ENCODE measurements at regions of chr13 and their contacts with region 1.

Region 1: GRCh38 chr13:101144808-101145419 is 271.4 kb downstream of the NALCN start:
- DNase-seq: peak; percentile 18
- ATAC-seq: no peak
- H3K4me3 Mint-ChIP-seq: no peak overlapping the region
- H3K27ac Mint-ChIP-seq: no peak overlapping the region
- H3K4me1 Mint-ChIP-seq: no peaks in the 10 kb centered on the region
- H3K27me3 Mint-ChIP-seq: peaks cover 28% of the 10 kb centered on the region

Region 2: DNA sequence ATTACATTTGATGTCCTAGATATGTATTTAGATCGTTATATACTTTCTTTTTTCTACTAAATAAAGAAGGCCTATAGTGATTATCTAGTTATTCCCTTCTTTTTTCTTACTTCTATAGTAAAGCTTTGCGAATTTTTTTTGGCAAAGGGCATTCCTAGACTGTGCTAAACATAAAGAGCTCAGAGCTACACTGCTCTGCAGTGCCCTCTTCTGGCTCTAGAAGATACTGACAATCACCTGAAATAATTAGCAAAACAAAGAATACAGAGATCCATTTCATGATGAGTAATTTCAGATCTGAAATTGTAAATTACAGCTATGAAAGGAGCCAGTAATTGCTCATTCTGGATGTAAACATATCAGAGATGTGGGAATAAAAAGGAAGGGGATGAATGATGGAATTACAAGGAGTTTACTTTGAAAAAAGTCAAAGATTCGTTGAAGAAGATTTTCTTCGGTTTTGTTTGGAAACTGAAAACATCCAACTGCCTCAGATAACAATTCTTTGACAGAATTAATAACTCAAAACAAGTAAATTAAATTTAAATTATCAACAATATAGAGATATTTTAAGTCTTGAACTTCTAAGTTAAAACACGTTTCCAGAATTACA is 17.1 kb before region 1 on chr13:
- CTCF ChIA-PET with region 1: interaction called, 14 read pairs
- POLR2A ChIA-PET with region 1: no interaction called
- intact Hi-C with region 1: no loop called
- DNase-seq: peak; percentile 28
- ATAC-seq: peak; percentile 76
- H3K4me3 Mint-ChIP-seq: no peak overlapping the region
- H3K27ac Mint-ChIP-seq: no peak overlapping the region
- H3K4me1 Mint-ChIP-seq: peaks cover 2% of the 10 kb centered on the region
- H3K27me3 Mint-ChIP-seq: peaks cover 6% of the 10 kb centered on the region

Region 3: GRCh38 chr13:101170306-101170705 is 25.4 kb after region 1 on chr13:
- CTCF ChIA-PET with region 1: interaction called, 12 read pairs
- POLR2A ChIA-PET with region 1: no interaction called
- intact Hi-C with region 1: no loop called
- DNase-seq: no peak
- ATAC-seq: no peak
- H3K4me3 Mint-ChIP-seq: no peak overlapping the region
- H3K27ac Mint-ChIP-seq: no peak overlapping the region
- H3K4me1 Mint-ChIP-seq: no peaks in the 10 kb centered on the region
- H3K27me3 Mint-ChIP-seq: peaks cover 7% of the 10 kb centered on the region

Region 4: DNA sequence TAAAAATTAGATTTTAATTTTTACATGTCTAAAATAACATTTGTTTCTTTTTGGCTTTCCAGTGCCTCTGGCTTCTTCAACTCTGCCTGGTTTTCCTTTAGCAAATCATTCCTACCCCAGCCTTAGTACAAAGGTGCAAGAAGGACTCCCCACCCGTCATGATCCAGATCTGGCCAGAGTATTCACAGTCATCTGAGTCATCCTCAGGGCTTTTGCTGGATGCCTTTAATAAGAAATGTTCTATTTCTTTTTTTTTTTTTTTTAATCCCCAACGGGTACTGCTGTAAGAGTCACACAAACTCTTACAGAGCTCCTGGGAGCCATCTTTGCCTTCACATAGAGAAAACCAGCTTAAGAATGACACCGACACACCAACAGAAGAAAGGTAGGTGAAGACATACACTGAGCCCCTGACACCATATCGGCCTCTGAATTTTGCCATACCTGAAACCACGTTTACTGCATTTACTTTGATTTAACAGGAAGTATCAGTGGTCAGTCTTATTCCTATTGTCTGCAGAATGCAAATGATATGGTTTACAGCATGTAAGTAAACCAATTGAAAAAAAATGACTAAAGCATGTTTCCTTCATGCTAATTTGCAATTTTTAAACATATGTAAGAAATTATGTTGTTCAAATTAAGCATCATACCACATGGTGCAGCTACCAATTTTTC is 87.0 kb after region 1 on chr13:
- CTCF ChIA-PET with region 1: no interaction called
- POLR2A ChIA-PET with region 1: no interaction called
- intact Hi-C with region 1: no loop called
- DNase-seq: no peak
- ATAC-seq: no peak
- H3K4me3 Mint-ChIP-seq: no peak overlapping the region
- H3K27ac Mint-ChIP-seq: no peak overlapping the region
- H3K4me1 Mint-ChIP-seq: no peaks in the 10 kb centered on the region
- H3K27me3 Mint-ChIP-seq: peaks cover 4% of the 10 kb centered on the region

Region 5: DNA sequence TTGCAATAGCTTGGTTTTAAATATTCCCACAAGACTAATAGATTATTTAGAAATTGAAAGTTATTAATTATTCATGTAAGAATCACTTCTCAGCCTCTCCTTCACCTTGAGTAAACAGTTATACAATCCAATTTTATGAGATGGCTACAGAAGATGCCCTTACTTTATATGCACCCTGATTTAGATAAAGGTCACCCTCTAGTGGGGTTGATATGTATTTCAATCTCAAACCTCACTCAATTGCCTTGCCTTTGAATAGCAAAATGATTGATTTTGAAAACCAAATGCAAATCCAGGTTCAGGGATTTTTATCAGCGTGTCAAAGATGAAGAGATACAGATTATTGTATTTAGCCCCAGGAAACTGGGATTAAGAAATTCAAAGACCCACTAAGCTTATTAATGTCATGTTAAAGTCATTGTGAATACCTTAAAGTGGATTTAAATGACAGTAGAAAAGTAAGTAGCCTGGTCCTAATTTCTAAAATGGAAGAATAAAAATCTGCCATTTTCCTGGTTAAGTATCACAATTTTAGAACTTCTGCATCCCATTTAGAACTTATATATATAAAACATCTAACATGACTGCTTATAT is 612.6 kb after region 1 on chr13:
- CTCF ChIA-PET with region 1: interaction called, 7 read pairs
- POLR2A ChIA-PET with region 1: no interaction called
- intact Hi-C with region 1: loop called (anchors 1 to 5 kb)
- DNase-seq: no peak
- ATAC-seq: peak; percentile 36
- H3K4me3 Mint-ChIP-seq: no peak overlapping the region
- H3K27ac Mint-ChIP-seq: no peak overlapping the region
- H3K4me1 Mint-ChIP-seq: no peaks in the 10 kb centered on the region
- H3K27me3 Mint-ChIP-seq: peaks cover 11% of the 10 kb centered on the region

Region 6: GRCh38 chr13:102141625-102142472 is 996.9 kb after region 1 on chr13:
- CTCF ChIA-PET with region 1: interaction called, 4 read pairs
- POLR2A ChIA-PET with region 1: no interaction called
- intact Hi-C with region 1: loop called in 1 of 2 experiments (anchors 10 kb)
- DNase-seq: no peak
- ATAC-seq: no peak
- H3K4me3 Mint-ChIP-seq: no peak overlapping the region
- H3K27ac Mint-ChIP-seq: no peak overlapping the region
- H3K4me1 Mint-ChIP-seq: no peaks in the 10 kb centered on the region
- H3K27me3 Mint-ChIP-seq: no peaks in the 10 kb centered on the region

Region 7: GRCh38 chr13:102555917-102556553 is 1411.1 kb after region 1 on chr13:
- CTCF ChIA-PET with region 1: interaction called, 18 read pairs
- POLR2A ChIA-PET with region 1: no interaction called
- intact Hi-C with region 1: loop called in 1 of 2 experiments (anchors 2 kb)
- DNase-seq: peak; percentile 9
- ATAC-seq: peak; percentile 73
- H3K4me3 Mint-ChIP-seq: no peak overlapping the region
- H3K27ac Mint-ChIP-seq: no peak overlapping the region
- H3K4me1 Mint-ChIP-seq: no peaks in the 10 kb centered on the region
- H3K27me3 Mint-ChIP-seq: no peaks in the 10 kb centered on the region

Measured in activated CD4-positive, alpha-beta T cell treated with anti-CD3 and anti-CD28 coated beads for 36 hours (primary cell).